ENCODE measurements at regions of chr4 and their contacts with region 1.

Region 1: GRCh38 chr4:185209031-185209851 is at the start of gene SNX25:
- DNase-seq: peak; percentile 77 to 93 (median 83)
- ATAC-seq: peak; percentile 96
- H3K4me3 ChIP-seq: peak within 1 kb of the TSS; percentile 81
- H3K4me3 Mint-ChIP-seq: peak within 1 kb of the TSS; percentile 87 to 95 (median 93)
- H3K27ac ChIP-seq: peak within 1 kb of the TSS; percentile 39
- H3K27ac Mint-ChIP-seq: peak within 1 kb of the TSS; percentile 82 to 93 (median 91)
- H3K4me1 ChIP-seq: peaks cover 27 to 28% of the 10 kb centered on the region in 2 donors
- H3K4me1 Mint-ChIP-seq: peaks cover 31 to 56% (median 47%) of the 10 kb centered on the region in 7 donors
- H3K27me3 ChIP-seq: no peaks in the 10 kb centered on the region
- H3K27me3 Mint-ChIP-seq: peaks cover 0 to 15% (median 0%) of the 10 kb centered on the region in 5 donors
- total RNA-seq, gene SNX25: 8.0 to 18.9 (median 14.3) TPM

Region 2: GRCh38 chr4:184343502-184344177 is 865.6 kb before region 1 on chr4:
- CTCF ChIA-PET with region 1: no interaction called
- POLR2A ChIA-PET with region 1: no interaction called
- intact Hi-C with region 1: no loop called
- DNase-seq: peak in 7 of 9 donors; percentile 18 to 59 (median 46)
- ATAC-seq: peak; percentile 59
- H3K4me3 ChIP-seq: peak overlapping the region; percentile 69
- H3K4me3 Mint-ChIP-seq: peak overlapping the region; percentile 74 to 92 (median 87)
- H3K27ac ChIP-seq: peak overlapping the region; percentile 4
- H3K27ac Mint-ChIP-seq: peak overlapping the region; percentile 40 to 88 (median 53)
- H3K4me1 ChIP-seq: no peaks in the 10 kb centered on the region
- H3K4me1 Mint-ChIP-seq: peaks cover 0 to 32% (median 16%) of the 10 kb centered on the region in 7 donors
- H3K27me3 ChIP-seq: no peaks in the 10 kb centered on the region
- H3K27me3 Mint-ChIP-seq: no peaks in the 10 kb centered on the region

Region 3: DNA sequence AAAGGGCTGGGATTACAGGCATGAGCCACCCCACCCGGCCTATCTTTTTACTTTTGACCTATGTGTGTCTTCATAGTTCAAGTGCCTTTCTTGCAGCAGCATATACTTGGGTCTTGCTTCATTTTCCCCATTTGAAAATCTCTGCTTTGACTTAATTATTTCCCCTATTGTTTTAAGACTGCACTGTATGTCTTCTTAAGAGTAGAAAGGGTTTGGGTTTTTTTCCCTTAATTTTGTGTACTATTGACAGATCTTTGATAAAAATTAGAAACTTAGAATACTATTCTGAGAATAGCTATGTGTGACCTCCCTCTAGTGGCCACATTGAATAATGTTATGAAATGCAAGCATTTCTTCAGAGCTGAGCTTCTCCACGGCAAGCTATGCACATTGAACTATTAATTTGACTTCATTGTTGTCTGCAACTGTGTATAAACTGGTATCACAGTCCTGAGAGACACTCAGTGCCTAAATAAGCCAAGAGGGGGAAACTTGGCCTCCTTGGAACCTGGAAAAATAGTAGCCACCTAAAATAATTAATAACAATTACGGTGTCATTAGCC is 74.9 kb before region 1 on chr4:
- CTCF ChIA-PET with region 1: no interaction called
- POLR2A ChIA-PET with region 1: no interaction called
- intact Hi-C with region 1: no loop called
- DNase-seq: peak in 6 of 9 donors; percentile 22 to 52 (median 40)
- ATAC-seq: peak; percentile 86
- H3K4me3 ChIP-seq: no peak overlapping the region
- H3K4me3 Mint-ChIP-seq: no peak overlapping the region
- H3K27ac ChIP-seq: no peak overlapping the region
- H3K27ac Mint-ChIP-seq: no peak overlapping the region
- H3K4me1 ChIP-seq: no peaks in the 10 kb centered on the region
- H3K4me1 Mint-ChIP-seq: no peaks in the 10 kb centered on the region
- H3K27me3 ChIP-seq: peaks cover 0 to 3% of the 10 kb centered on the region in 2 donors
- H3K27me3 Mint-ChIP-seq: peaks cover 29 to 68% (median 40%) of the 10 kb centered on the region in 5 donors

Region 4: GRCh38 chr4:185304944-185305690 is 95.9 kb after region 1 on chr4:
- CTCF ChIA-PET with region 1: no interaction called
- POLR2A ChIA-PET with region 1: no interaction called
- intact Hi-C with region 1: loop called (anchors 5 kb)
- DNase-seq: peak in 7 of 9 donors; percentile 0 to 44 (median 36)
- ATAC-seq: peak; percentile 59
- H3K4me3 ChIP-seq: no peak overlapping the region
- H3K4me3 Mint-ChIP-seq: no peak overlapping the region
- H3K27ac ChIP-seq: no peak overlapping the region
- H3K27ac Mint-ChIP-seq: peak overlapping the region in 2 of 9 donors; percentile 25 to 75
- H3K4me1 ChIP-seq: no peaks in the 10 kb centered on the region
- H3K4me1 Mint-ChIP-seq: peaks cover 0 to 15% (median 0%) of the 10 kb centered on the region in 7 donors
- H3K27me3 ChIP-seq: no peaks in the 10 kb centered on the region
- H3K27me3 Mint-ChIP-seq: no peaks in the 10 kb centered on the region

Region 5: GRCh38 chr4:185504098-185505047 is 295.1 kb after region 1 on chr4:
- CTCF ChIA-PET with region 1: no interaction called
- POLR2A ChIA-PET with region 1: no interaction called
- intact Hi-C with region 1: no loop called
- DNase-seq: no peak
- ATAC-seq: no peak
- H3K4me3 ChIP-seq: no peak overlapping the region
- H3K4me3 Mint-ChIP-seq: no peak overlapping the region
- H3K27ac ChIP-seq: no peak overlapping the region
- H3K27ac Mint-ChIP-seq: no peak overlapping the region
- H3K4me1 ChIP-seq: no peaks in the 10 kb centered on the region
- H3K4me1 Mint-ChIP-seq: no peaks in the 10 kb centered on the region
- H3K27me3 ChIP-seq: no peaks in the 10 kb centered on the region
- H3K27me3 Mint-ChIP-seq: peaks cover 28 to 38% (median 29%) of the 10 kb centered on the region in 5 donors

Region 6: DNA sequence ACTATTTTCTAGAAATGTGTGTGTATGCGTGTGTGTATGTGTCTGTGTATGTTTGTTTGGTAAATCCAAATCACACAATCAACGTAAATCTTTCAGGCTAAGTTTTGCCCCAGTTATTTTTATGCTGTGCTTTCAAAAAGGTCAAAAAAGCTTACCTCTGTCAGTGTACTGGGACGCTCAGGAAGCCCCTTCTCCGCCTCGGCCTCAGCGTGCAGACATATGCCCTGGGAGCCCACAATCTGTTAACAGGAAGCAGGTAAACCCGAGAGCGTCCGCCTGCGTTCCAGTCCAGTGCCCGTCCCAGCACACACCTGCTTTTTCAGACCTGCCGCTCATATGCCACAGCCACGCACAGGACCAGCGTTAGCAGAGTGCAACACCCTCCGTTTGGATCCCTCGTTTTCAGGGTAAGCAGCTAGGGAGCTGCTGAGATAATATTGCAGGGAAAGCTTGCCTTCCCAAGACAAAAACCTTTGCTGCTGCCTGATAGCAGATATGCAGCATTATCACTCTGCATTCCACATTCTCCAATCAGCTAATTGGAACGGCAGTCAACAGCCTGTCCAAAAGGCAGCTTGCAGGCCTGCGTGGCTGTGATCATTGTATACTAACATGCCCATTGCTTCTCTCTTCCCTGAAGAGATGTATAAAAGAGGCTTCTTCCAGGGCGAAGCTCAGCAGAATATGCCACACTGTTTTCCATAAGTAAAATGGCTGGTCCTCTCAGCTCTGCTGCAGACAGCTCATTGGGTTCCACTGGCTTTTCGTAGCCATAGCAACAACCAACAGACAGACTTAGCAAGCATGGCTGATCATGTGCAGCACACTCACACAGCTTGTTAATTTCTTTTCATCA is 602.5 kb after region 1 on chr4 and contains the start of gene SORBS2:
- CTCF ChIA-PET with region 1: no interaction called
- POLR2A ChIA-PET with region 1: no interaction called
- intact Hi-C with region 1: no loop called
- DNase-seq: no peak
- ATAC-seq: no peak
- H3K4me3 ChIP-seq: no peak within 1 kb of the TSS
- H3K4me3 Mint-ChIP-seq: no peak within 1 kb of the TSS
- H3K27ac ChIP-seq: no peak within 1 kb of the TSS
- H3K27ac Mint-ChIP-seq: no peak within 1 kb of the TSS
- H3K4me1 ChIP-seq: no peaks in the 10 kb centered on the region
- H3K4me1 Mint-ChIP-seq: peaks cover 0 to 5% (median 0%) of the 10 kb centered on the region in 7 donors
- H3K27me3 ChIP-seq: no peaks in the 10 kb centered on the region
- H3K27me3 Mint-ChIP-seq: peaks cover 9 to 38% (median 28%) of the 10 kb centered on the region in 5 donors
- total RNA-seq, gene SORBS2: 0.21 to 1.4 TPM in 2 of 5 experiments, not detected in the others